Aorta (tissue), 5 donors: ENCODE measurements at regions of chr3 and their contacts with region 1.

Region 1: GRCh38 chr3:146747928-146748327 is 142.8 kb upstream of the PLSCR5 start:
- DNase-seq: no peak
- ATAC-seq: no peak
- H3K4me3 ChIP-seq: no peak overlapping the region
- H3K27ac ChIP-seq: no peak overlapping the region
- H3K4me1 ChIP-seq: no peaks in the 10 kb centered on the region
- H3K27me3 ChIP-seq: no peaks in the 10 kb centered on the region

Region 2: DNA sequence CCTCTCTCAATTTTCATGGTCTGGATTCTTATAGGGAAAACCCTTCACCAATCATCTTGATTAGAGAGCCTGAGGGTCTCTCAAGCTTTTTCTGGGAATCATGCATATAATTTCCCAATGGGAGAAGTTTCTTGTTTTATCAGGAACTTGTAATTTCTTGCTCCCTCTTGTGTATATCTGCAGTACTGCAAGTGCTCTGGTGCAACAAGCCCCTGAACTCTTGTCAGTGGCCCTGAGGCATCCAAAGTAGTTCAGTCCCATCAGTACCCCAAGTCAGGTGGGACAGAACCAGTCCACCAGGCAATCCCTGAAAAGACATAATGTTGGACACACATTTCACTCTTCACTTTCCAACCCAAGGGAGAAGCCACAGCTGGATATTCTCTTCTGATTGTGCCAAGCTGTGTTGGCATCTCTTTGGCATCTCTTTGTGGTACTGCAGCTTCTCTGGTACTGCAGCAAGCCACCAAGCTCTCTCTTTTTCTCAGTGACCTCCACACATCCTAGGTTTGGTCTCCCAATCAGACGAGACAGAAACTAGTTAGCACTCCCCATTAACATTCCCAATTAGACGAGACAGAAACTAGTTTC is 444.0 kb after region 1 on chr3:
- intact Hi-C with region 1: loop called (anchors 5 to 10 kb)
- DNase-seq: no peak
- ATAC-seq: no peak
- H3K4me3 ChIP-seq: no peak overlapping the region
- H3K27ac ChIP-seq: no peak overlapping the region
- H3K4me1 ChIP-seq: no peaks in the 10 kb centered on the region
- H3K27me3 ChIP-seq: no peaks in the 10 kb centered on the region